ENCODE measurements at regions of chr1 and their contacts with region 1.

Region 1: DNA sequence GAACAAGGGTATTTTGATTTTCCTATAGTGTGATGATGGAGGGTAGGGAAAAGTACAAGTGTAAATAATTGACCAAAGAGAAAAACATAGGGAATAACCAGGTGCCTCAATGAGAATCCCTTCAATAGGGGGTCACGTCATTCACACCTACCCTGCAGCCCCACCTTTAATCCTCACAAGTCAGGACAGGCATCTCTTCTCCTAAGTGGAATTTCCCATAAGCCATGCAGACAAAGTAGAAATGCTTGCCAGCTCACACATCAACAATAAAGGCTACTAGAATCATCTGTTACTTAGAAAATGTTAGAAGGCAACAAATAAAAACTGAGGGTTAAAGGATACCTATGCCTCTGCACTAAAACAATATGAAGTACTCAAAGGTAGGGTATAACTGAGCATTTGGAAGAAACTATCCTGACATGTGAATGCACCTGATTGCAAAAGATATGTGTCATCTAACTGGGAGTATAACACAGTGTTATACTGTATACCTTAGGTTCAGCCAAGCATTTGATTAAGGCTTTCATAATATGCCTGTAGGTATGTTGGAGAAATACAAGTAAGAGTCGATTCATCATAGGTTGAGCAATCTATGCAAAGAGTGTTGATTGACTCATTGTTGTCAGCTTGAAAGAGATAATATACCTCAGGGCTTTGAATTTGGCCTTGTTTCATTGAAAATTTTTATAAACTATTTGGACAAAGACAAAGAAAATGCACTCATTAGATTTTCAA is 32.4 kb upstream of the ATP1A1 start:
- DNase-seq: peak; percentile 92
- H3K4me3 ChIP-seq: no peak overlapping the region
- H3K27ac ChIP-seq: peak overlapping the region; percentile 85
- H3K4me1 ChIP-seq: peaks cover 23% of the 10 kb centered on the region
- H3K27me3 ChIP-seq: no peaks in the 10 kb centered on the region
- CTCF ChIP-seq: no peak

Region 2: DNA sequence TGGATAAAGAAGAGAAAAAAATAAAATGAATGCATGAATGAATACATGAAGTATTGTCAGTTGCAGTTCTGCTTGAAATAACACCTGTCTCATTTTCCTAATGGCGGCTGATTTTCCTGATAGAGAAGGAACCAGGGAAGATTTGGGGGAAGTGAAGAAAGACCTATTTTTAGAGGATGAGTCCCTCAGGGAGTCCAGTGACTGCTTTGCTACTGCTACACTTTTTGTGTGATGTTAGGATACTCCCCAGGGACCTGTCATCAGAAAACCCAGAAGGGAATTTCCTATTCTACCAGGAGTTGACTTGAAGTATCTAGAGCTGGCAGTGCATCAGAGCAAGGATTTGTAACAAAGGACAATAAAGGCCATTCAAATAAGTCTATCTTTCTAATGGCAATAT is 114.7 kb before region 1 on chr1:
- CTCF ChIA-PET with region 1: no interaction called
- dilution Hi-C with region 1: loop called (anchors 25 kb)
- in situ Hi-C with region 1: loop called in 1 of 2 experiments (anchors 25 kb)
- intact Hi-C with region 1: loop called (anchors 5 kb)
- DNase-seq: peak; percentile 12
- H3K4me3 ChIP-seq: no peak overlapping the region
- H3K27ac ChIP-seq: no peak overlapping the region
- H3K4me1 ChIP-seq: no peaks in the 10 kb centered on the region
- H3K27me3 ChIP-seq: no peaks in the 10 kb centered on the region
- CTCF ChIP-seq: no peak

Region 3: DNA sequence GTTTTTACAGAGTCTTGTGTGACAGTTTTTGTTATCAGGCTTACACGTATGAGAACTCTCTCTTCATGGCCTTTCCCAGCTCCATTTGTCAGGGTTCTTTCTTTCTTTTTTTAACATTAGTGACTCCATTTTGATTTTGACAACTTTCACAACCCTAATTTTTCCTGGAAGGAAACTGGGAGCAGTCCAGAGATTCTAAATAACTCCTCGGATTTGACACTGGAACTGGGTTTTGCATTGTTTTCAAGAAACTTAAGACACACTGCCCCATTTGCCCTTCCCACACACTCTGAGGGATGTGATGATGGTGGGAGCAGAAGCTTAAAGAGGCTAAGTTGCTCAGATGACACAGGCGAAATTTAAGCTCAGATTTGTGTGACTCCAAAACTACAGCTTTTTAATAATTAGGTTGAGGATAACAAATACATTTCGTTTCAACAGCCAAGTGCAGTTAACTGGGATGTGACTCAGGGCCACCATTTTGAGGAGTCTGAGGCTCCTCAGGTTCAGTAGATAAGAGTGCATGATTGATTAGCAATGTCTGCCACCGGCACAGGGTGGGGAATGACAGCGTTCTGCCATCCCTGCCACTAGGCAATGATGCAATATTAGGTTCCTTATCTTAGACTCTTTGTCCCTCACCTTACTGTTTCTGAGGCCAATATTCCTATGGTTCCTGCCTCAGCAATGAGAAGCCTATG is 62.7 kb before region 1 on chr1:
- CTCF ChIA-PET with region 1: no interaction called
- dilution Hi-C with region 1: no loop called
- in situ Hi-C with region 1: no loop called
- intact Hi-C with region 1: no loop called
- DNase-seq: no peak
- H3K4me3 ChIP-seq: no peak overlapping the region
- H3K27ac ChIP-seq: no peak overlapping the region
- H3K4me1 ChIP-seq: peaks cover 19% of the 10 kb centered on the region
- H3K27me3 ChIP-seq: no peaks in the 10 kb centered on the region
- CTCF ChIP-seq: no peak

Region 4: GRCh38 chr1:116352349-116352813 is 11.7 kb after region 1 on chr1:
- CTCF ChIA-PET with region 1: no interaction called
- dilution Hi-C with region 1: no loop called
- in situ Hi-C with region 1: no loop called
- intact Hi-C with region 1: no loop called
- DNase-seq: peak; percentile 32
- H3K4me3 ChIP-seq: peak overlapping the region in 1 of 3 experiments; percentile 9
- H3K27ac ChIP-seq: no peak overlapping the region
- H3K4me1 ChIP-seq: peaks cover 4% of the 10 kb centered on the region
- H3K27me3 ChIP-seq: no peaks in the 10 kb centered on the region
- CTCF ChIP-seq: no peak

Region 5: GRCh38 chr1:116372587-116373444 is 32.1 kb after region 1 on chr1 and contains the start of gene ATP1A1:
- CTCF ChIA-PET with region 1: no interaction called
- dilution Hi-C with region 1: no loop called
- in situ Hi-C with region 1: no loop called
- intact Hi-C with region 1: loop called (anchors 2 kb)
- DNase-seq: peak; percentile 91
- H3K4me3 ChIP-seq: peak within 1 kb of the TSS; percentile 62 to 91 (median 82)
- H3K27ac ChIP-seq: peak within 1 kb of the TSS; percentile 95
- H3K4me1 ChIP-seq: peaks cover 36% of the 10 kb centered on the region
- H3K27me3 ChIP-seq: no peaks in the 10 kb centered on the region
- CTCF ChIP-seq: peak in 1 of 2 donors; percentile 28
- total RNA-seq, gene ATP1A1: 359 to 505 TPM

Measured in mammary epithelial cell (primary cell).